ENCODE measurements at regions of chr13 and their contacts with region 1.

Region 1: DNA sequence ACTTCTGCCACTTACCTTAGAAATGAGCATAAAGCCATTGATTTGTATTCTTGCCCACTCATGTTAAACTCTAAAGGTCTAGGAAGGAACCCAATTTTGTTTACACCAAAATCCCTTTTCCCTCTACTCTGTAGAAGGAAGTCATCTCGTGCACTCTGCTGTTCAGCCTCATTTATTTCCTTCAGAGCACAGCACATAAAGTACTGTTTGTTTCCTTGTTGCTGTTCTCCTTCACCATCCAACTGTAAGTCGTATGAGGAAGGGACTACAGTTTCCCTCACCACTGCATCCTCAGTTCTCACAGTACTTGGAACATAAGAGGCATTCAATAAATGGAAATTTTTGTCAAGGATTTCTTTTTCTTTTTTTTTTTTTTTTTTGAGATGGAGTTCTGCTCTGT is 24.6 kb downstream of the CDADC1 start:
- DNase-seq: no peak
- H3K4me3 Mint-ChIP-seq: no peak overlapping the region
- H3K27ac Mint-ChIP-seq: no peak overlapping the region
- H3K4me1 Mint-ChIP-seq: no peaks in the 10 kb centered on the region
- H3K27me3 Mint-ChIP-seq: no peaks in the 10 kb centered on the region

Region 2: DNA sequence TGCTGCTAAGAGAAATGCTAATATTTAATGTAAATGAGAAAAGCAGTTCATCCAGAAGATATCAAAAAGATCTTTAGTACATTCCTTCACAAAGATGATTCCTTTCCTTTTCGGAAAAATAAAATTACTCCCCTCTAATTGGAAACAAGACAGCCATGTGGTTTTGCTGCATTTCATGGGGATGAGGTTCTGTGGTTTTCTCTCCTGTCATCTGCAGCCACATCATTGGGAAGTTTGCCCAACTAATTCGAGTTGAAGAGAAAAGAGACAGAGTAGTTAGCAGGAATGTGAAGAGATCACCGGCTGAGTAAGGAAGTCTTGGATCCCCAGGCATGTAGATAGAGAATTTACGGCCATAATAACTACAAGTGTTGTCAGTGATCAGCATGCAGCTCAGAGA is 496.5 kb before region 1 on chr13:
- intact Hi-C with region 1: loop called (anchors 10 kb)
- DNase-seq: no peak
- H3K4me3 Mint-ChIP-seq: no peak overlapping the region
- H3K27ac Mint-ChIP-seq: no peak overlapping the region
- H3K4me1 Mint-ChIP-seq: no peaks in the 10 kb centered on the region
- H3K27me3 Mint-ChIP-seq: peaks cover 16% of the 10 kb centered on the region

Measured in activated T-helper 1 cell treated with anti-CD3 and anti-CD28 coated beads, Interleukin-12 subunit alpha, Interleukin-12 subunit beta, Interleukin-2, Interleukin-4 antibody, amounts not matched to agents 30 ng/mL and 10 ng/mL and 1 ng/mL, durations not matched to agents 14 hours and 24 hours and 36 hours (primary cell).